ENCODE measurements at regions of chr1 and their contacts with region 1.

Region 1: DNA sequence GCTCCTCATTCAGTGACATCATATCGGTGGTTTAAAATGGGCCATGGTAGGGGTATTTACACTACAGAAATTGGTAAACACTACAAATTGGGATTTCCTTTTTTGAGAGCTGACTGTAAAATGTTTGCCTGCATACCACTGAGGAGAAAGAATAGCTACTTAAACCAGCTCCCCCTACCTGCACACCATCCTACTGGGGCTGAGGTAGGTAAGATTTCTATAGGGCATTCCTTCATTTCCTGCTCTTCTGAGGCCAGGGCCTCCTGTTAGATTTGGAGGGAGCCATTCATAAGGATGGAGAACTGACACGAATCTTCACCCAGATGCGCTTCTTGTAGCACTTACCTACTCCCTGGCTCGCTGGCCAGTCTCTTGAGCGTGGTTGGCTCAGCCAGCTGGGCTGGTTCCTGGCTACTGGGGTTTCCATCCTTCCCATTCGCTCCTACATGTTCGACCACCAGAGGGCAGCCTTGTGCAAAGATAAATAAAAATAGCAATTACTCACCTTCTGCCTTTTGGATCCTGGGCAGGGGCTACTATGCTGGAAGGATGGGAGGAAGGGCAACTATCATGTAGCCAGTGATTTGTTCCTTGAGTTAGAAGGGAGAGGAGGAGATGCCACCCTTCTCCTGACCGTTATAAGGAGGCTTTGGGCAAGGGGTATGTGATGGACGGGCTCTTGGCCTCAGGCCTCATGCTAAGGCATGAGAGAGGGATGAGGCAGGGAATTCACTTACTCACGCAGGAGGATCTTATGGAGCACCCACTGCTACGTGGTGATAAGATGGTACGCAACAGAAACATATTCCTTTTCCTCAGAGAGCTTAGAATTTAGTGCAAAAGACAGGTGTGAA is 10.7 kb downstream of the OPTC start:
- DNase-seq: peak; percentile 80 to 93 (median 85)
- ATAC-seq: peak; percentile 44 to 61
- H3K4me3 ChIP-seq: no peak overlapping the region
- H3K27ac ChIP-seq: no peak overlapping the region
- H3K4me1 ChIP-seq: peaks cover 15% of the 10 kb centered on the region
- H3K27me3 ChIP-seq: no peaks in the 10 kb centered on the region

Region 2: GRCh38 chr1:203597331-203598090 is 92.9 kb after region 1 on chr1:
- intact Hi-C with region 1: loop called in 1 of 4 experiments (anchors 5 kb)
- DNase-seq: peak in 1 of 3 donors; percentile 21
- ATAC-seq: peak; percentile 29 to 46
- H3K4me3 ChIP-seq: no peak overlapping the region
- H3K27ac ChIP-seq: peak overlapping the region; percentile 40
- H3K4me1 ChIP-seq: peaks cover 10% of the 10 kb centered on the region
- H3K27me3 ChIP-seq: no peaks in the 10 kb centered on the region

Region 3: DNA sequence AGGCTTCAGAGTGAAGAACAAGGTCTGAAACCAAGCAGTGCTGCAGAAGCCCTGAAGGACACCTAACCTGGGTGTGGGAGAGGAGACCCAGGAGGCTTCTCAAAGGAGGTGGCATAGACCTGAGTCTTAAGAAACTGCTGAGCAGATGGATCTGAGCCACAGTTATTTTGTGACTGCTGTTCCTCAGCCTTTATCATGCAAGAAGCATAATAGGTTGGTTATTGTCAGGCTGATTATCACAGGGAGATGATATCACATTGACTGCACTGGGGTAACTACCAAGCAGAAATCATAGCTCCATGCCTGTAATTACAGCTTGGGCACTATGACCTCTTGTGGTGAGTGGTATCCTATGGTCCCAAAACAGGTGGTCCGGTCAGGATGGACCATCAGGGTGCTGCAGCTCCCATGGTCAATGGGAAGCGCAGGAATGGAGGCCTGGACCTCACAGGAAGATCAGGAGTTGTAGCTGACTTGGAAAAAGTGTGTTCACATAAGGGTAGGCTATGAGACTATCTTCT is 110.5 kb after region 1 on chr1:
- intact Hi-C with region 1: loop called in 3 of 4 experiments (anchors 5 to 10 kb)
- DNase-seq: no peak
- ATAC-seq: peak in 1 of 2 donors; percentile 29
- H3K4me3 ChIP-seq: no peak overlapping the region
- H3K27ac ChIP-seq: no peak overlapping the region
- H3K4me1 ChIP-seq: no peaks in the 10 kb centered on the region
- H3K27me3 ChIP-seq: no peaks in the 10 kb centered on the region

Region 4: DNA sequence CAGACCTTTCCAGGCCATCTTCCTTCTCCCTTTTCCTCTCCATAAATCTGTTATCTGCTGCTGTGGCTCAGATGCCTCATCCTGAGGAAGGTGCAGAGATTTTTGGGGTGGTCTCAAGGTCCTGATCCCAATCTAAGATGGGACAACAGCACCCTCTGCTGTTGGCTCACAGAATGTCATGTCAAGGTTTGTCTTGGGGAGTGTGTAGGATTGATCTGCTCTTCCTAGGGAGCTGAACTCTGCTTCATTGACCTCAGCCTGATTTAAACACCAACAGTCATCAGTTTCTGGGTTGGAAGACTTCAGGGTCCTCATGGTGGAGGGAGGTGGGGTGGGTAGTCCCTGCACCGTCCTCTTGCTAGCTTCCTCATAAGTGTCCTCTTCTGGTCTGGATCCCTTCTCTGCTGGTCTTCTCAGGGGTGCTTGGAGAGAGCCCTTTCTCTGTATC is 197.5 kb after region 1 on chr1:
- intact Hi-C with region 1: loop called (anchors 2 to 5 kb)
- DNase-seq: peak; percentile 33 to 67 (median 56)
- ATAC-seq: peak; percentile 57 to 68
- H3K4me3 ChIP-seq: no peak overlapping the region
- H3K27ac ChIP-seq: no peak overlapping the region
- H3K4me1 ChIP-seq: peaks cover under 1% of the 10 kb centered on the region
- H3K27me3 ChIP-seq: no peaks in the 10 kb centered on the region

Region 5: DNA sequence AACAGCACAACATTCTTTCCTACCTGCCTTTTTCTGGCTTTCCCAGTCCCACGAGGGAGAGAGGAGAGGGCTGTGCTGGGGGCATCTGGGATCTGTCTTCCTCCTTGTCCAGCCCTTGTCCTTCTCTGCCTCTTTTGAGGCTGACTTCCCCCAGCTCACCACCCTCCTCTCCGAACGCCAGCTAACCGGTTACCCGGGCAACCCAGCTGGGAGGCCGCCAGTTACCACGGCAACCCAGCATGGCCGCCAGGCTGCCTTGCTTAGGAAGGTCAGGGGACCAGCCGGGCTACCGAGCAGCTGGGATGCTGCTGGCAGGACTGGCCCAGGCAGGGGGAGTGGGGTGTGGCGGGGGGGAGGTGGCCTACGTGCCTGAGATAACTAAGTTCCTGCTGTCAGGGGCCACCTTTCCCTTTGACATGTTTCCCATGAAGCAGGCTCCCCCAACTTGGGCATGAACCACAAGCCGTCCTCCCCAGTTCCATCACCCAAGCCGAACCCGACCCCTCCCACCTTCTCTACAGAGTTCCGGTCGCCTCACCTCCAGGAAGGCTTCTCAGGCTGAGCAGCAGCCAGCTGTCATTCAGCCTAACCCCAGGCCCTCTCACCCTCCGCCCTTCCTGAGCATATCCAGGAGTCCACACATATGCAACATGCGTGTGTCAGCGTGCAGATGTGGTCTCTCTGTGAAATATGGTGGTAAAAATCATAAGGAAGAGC is 846.4 kb after region 1 on chr1:
- intact Hi-C with region 1: no loop called
- DNase-seq: peak; percentile 88 to 96 (median 96)
- ATAC-seq: peak; percentile 65 to 72
- H3K4me3 ChIP-seq: no peak overlapping the region
- H3K27ac ChIP-seq: peak overlapping the region; percentile 27
- H3K4me1 ChIP-seq: peaks cover 12% of the 10 kb centered on the region
- H3K27me3 ChIP-seq: no peaks in the 10 kb centered on the region